AG04449 (cell line): ENCODE measurements at regions of chr3 and their contacts with region 1.

Region 1: GRCh38 chr3:14452679-14453367 is 50.4 kb downstream of the SLC6A6 start:
- DNase-seq: peak; percentile 88
- H3K4me3 ChIP-seq: peak overlapping the region; percentile 12; the same call in 1 of the 2 replicates
- CTCF ChIP-seq: no peak

Region 2: GRCh38 chr3:14170531-14171173 is 282.2 kb before region 1 on chr3:
- CTCF ChIA-PET with region 1: no interaction called
- POLR2A ChIA-PET with region 1: no interaction called
- DNase-seq: peak; percentile 42
- H3K4me3 ChIP-seq: no peak overlapping the region
- CTCF ChIP-seq: no peak

Region 3: GRCh38 chr3:14413381-14414071 is 39.3 kb before region 1 on chr3:
- CTCF ChIA-PET with region 1: no interaction called
- POLR2A ChIA-PET with region 1: interaction called, 11 read pairs
- DNase-seq: no peak
- H3K4me3 ChIP-seq: no peak overlapping the region
- CTCF ChIP-seq: no peak

Region 4: GRCh38 chr3:14431892-14432834 is 20.7 kb before region 1 on chr3:
- CTCF ChIA-PET with region 1: interaction called, 6 read pairs
- POLR2A ChIA-PET with region 1: interaction called, 10 read pairs
- DNase-seq: peak; percentile 29
- H3K4me3 ChIP-seq: no peak overlapping the region
- CTCF ChIP-seq: no peak

Region 5: GRCh38 chr3:14439579-14440518 is 13.0 kb before region 1 on chr3:
- CTCF ChIA-PET with region 1: interaction called, 12 read pairs
- POLR2A ChIA-PET with region 1: interaction called, 3 read pairs
- DNase-seq: no peak
- H3K4me3 ChIP-seq: no peak overlapping the region
- CTCF ChIP-seq: no peak